ENCODE measurements at regions of chr4 and their contacts with region 1.

Region 1: DNA sequence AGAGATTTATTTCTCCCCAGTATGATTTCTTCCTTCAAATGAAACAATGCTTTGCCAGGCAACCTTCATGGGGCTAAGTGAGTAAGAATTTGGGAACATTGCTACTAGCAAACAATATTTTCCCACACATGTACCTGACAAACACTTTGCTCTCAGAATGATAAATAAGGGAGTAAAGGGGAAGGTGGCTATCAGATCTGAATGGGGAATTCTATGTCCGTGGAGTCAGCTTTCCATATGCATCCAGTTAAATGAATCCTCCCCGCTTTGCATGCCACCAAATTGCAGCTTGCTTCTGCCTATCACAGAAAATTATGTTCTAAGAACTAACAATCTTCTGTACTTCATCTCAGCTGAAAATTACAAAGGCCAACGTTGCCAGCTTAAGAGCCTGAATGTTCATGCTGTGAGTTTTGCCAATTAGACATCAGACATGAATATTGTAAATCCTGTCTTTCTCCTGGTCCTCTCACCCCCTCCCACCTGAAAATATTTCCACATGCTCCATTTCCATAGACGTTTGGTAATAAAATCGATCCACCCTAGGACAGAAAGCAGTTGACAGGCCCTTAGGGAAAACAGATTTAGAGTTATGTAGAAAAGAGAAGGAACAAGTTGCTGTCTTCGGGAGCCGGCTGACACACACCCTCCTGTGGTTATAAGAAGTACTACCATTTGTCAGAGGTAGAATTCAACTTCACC is 6.3 kb downstream of the MEPE start:
- DNase-seq: peak; percentile 45
- ATAC-seq: no peak
- H3K4me3 ChIP-seq: no peak overlapping the region
- H3K27ac ChIP-seq: no peak overlapping the region
- H3K4me1 ChIP-seq: peaks cover 25% of the 10 kb centered on the region
- H3K27me3 ChIP-seq: no peaks in the 10 kb centered on the region
- CTCF ChIP-seq: peak; percentile 77

Region 2: DNA sequence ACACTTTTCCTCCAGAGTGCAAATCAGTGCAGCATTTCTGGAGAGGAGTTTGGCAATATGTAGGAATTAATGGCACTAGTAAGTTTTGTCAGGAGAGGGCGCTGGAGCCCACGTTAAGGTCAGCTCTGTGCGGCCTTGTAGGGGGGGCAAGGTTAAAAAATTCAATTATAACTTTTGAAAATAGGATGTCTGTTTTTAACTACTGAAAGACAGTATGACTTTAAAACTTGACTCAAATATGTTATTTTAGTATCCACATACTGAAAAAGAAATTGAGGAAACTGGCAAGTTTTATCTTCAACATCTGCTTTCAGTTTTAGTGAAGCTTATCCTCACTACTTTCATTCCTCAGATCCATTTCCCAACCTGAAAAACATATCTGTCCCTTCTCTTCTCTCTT is 485.4 kb before region 1 on chr4:
- CTCF ChIA-PET with region 1: no interaction called
- POLR2A ChIA-PET with region 1: no interaction called
- intact Hi-C with region 1: loop called (anchors 5 kb)
- DNase-seq: peak; percentile 67
- ATAC-seq: peak; percentile 61
- H3K4me3 ChIP-seq: no peak overlapping the region
- H3K27ac ChIP-seq: no peak overlapping the region
- H3K4me1 ChIP-seq: peaks cover 20% of the 10 kb centered on the region
- H3K27me3 ChIP-seq: no peaks in the 10 kb centered on the region
- CTCF ChIP-seq: peak; percentile 76

Region 3: GRCh38 chr4:87543835-87544461 is 295.1 kb before region 1 on chr4:
- CTCF ChIA-PET with region 1: interaction called, 5 read pairs
- POLR2A ChIA-PET with region 1: no interaction called
- intact Hi-C with region 1: loop called (anchors 2 kb)
- DNase-seq: peak; percentile 69
- ATAC-seq: peak; percentile 80
- H3K4me3 ChIP-seq: no peak overlapping the region
- H3K27ac ChIP-seq: no peak overlapping the region
- H3K4me1 ChIP-seq: no peaks in the 10 kb centered on the region
- H3K27me3 ChIP-seq: no peaks in the 10 kb centered on the region
- CTCF ChIP-seq: peak; percentile 73

Region 4: DNA sequence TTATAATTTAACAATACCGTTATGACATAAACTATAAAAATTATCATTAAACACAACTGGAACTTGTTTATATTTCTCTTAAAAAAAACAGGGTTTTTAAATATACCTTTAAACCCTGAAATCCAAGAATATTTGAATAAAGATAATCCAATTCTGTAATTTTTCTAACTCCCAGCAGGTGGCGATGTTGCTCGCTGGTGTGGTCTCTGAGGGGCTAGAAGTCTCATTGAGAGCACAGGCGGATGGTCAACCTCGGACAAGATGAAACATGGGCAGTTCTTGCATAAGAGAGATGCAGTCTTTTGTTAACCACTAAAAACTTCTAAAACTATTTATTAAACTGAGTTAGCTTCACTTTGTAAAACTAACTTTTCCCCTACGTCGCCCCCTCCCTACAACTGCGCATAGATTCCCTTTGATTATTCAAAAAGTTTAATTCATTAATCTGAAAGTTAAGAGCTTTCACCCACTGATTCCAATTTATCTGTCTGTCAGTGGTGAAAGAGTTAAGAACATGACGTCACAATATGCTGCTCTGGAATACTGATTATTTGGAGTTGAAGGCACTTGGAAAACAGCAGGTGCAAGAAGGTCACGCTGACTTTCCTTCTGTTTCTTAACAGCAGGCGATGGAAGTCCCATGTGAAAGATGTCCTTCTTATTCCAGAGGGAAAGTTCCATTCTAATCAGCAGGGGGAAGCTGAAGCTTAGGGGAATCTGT is 159.4 kb before region 1 on chr4:
- CTCF ChIA-PET with region 1: interaction called, 4 read pairs
- POLR2A ChIA-PET with region 1: no interaction called
- intact Hi-C with region 1: loop called (anchors 1 kb)
- DNase-seq: peak; percentile 53
- ATAC-seq: no peak
- H3K4me3 ChIP-seq: no peak overlapping the region
- H3K27ac ChIP-seq: no peak overlapping the region
- H3K4me1 ChIP-seq: no peaks in the 10 kb centered on the region
- H3K27me3 ChIP-seq: no peaks in the 10 kb centered on the region
- CTCF ChIP-seq: peak; percentile 80

Measured in PC-3 (cell line).